ENCODE measurements at regions of chr10 and their contacts with region 1.

Region 1: DNA sequence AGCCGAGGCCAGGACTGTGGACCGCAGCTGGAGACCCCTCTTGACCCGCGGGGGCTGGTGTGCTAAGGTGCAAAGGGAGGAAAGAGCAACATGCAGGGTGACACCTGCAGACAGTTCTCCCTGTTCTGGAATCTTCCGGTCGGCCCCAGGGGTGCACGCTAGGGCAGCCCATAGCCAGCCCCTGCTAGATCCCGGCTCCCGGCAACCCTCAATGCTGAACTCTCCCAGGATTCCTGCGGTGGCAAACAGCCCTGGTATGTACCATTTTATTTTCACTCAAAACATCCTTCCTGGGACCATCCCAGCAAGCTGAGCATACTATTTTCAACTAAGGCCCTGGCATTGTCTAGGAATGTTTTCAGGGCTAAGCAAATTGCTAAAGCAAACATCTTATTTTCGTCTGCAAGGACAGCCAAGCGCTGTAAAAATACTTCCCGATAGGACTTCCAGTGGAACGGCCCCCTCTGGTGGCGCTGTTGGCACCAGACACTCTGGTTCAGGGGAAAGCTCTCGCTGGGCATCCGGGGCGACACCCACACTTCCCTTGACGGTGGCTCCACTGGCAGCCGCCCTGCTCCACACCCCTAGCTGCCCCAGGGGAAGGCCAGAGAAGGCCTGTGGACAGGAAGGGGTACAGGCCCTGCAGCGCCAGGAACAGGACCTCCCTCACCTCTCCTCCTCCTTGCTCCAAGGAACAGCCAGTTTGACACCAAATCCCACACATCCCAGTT is 99.4 kb downstream of the CTBP2 start:
- DNase-seq: peak; percentile 94 to 95
- ATAC-seq: peak; percentile 82
- H3K4me3 ChIP-seq: no peak overlapping the region
- H3K27ac ChIP-seq: peak overlapping the region; percentile 78 to 97
- H3K4me1 ChIP-seq: peaks cover 5 to 6% of the 10 kb centered on the region in 2 donors
- H3K27me3 ChIP-seq: no peaks in the 10 kb centered on the region

Region 2: DNA sequence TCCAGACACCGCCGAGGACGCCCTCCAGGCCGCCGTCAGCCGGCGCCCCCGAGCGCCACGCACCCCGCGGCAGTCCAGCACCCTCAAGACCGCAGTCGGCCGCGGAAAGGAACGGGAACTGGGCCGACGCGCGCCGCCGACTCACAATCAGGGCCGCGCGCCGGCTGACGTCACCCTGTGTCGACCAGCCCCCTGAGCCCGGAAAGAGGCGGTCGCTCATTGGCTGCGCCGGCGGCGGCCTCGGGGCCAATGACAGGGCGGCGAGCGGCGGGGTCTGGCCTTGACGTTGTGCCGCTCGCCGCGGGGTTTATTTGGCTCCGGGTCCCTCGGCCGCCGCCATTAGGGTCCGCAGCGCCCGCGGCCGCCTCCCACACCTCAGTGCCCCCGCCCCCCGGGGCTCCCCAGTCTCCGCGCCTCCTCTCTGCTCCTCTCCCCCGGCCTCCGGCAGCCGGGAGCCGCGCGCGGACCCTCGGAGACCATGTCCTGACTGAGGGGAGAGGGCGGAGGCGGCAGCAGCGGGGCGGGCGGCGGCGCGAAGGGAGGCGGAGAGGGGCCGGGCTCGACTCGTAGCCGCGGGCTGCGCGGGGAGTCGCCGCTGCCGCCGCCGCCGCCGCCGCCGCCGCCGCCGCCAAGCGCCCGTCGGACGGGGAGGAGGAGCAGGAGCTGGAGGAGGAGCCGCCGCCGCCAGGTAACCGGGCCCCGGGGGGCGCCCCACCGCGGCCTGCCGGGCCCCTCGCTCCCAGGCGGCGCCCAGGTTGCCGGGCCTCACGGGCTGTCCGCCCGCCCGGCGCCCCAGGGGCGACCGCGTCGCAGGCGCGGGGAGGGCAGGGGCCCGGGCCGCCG is 144.2 kb before region 1 on chr10:
- intact Hi-C with region 1: loop called in 1 of 2 experiments (anchors 5 kb)
- DNase-seq: peak; percentile 99 to 100
- ATAC-seq: peak; percentile 99
- H3K4me3 ChIP-seq: peak overlapping the region; percentile 92 to 94
- H3K27ac ChIP-seq: peak overlapping the region; percentile 90 to 99
- H3K4me1 ChIP-seq: peaks cover 2 to 7% of the 10 kb centered on the region in 2 donors
- H3K27me3 ChIP-seq: no peaks in the 10 kb centered on the region

Region 3: GRCh38 chr10:125015312-125015944 is 45.6 kb before region 1 on chr10:
- intact Hi-C with region 1: loop called in 1 of 2 experiments (anchors 5 kb)
- DNase-seq: peak; percentile 82 to 87
- ATAC-seq: peak; percentile 57
- H3K4me3 ChIP-seq: no peak overlapping the region
- H3K27ac ChIP-seq: peak overlapping the region; percentile 80 to 98
- H3K4me1 ChIP-seq: peaks cover 1 to 4% of the 10 kb centered on the region in 2 donors
- H3K27me3 ChIP-seq: no peaks in the 10 kb centered on the region

Region 4: DNA sequence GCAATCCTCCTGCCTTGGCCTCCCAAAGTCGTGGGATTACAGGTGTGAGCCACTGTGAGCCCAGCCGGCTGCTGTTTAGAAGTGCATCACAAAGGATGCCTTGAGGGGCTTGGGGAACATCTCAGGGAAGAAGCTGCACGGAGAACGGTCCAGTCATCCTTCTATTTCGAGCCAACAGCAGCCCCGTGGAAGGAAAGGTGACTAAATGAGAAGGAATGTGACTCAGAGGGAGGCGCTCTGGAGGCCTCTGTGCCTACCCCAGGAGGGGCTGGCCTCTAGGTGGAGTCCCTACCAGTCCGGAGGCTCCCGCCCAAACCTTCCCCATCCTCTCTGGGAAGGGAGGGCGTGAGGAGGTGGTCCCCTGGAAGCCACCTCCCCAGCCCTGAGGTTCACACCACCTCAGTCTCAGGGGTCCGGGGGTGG is 23.2 kb after region 1 on chr10:
- intact Hi-C with region 1: loop called in 1 of 2 experiments (anchors 2 kb)
- DNase-seq: peak; percentile 82 to 89
- ATAC-seq: peak; percentile 88
- H3K4me3 ChIP-seq: no peak overlapping the region
- H3K27ac ChIP-seq: peak overlapping the region; percentile 85 to 91
- H3K4me1 ChIP-seq: peaks cover 0 to 7% of the 10 kb centered on the region in 2 donors
- H3K27me3 ChIP-seq: no peaks in the 10 kb centered on the region

Region 5: DNA sequence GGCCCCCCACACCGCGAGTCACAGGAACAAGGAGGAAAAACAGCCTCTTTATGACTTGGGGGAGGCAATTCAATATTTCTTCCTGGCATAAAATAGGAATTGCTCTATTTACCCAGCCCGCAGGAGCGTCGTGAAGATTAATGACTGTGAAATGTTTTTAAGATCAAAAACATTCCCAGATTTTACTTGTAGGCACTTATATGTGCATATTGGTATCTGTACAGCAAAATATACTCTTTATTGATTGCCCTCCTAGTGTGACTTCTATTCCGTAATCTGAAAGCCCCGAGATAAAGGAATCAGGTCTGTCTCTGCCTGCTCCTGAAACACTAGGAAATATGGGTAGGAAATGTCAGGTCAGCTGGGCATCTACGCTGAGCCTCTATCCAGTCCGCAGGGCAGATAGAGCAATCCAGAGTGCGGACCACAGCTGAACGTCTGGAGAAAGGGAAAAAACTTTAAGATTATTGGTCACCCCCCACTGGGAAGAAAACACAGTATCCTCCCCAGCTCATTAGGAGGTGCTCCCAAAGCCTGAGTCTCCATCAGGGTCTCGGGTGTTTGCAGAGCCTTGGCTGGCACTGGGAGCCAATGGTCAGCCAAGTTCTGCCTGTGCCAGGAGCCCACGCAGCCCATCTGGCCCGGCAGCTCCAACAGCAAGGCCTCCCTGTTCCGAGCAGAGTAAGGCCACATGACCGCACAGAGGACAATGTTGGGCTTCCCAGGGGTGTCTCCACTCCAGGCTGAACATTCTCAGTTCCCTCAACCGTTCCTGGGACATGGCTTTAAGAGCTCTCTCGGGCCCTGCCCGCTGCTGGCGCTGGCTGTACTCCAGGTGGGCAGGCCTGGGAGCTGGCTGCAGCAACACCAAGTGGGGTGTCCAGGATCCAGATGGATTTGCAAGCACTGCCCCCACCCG is 91.7 kb after region 1 on chr10:
- intact Hi-C with region 1: loop called in 1 of 2 experiments (anchors 5 kb)
- DNase-seq: peak; percentile 67 to 82
- ATAC-seq: peak; percentile 70
- H3K4me3 ChIP-seq: no peak overlapping the region
- H3K27ac ChIP-seq: peak overlapping the region; percentile 33 to 41
- H3K4me1 ChIP-seq: peaks cover 0 to 18% of the 10 kb centered on the region in 2 donors
- H3K27me3 ChIP-seq: no peaks in the 10 kb centered on the region